ENCODE measurements at regions of chr4 and their contacts with region 1.

Region 1: DNA sequence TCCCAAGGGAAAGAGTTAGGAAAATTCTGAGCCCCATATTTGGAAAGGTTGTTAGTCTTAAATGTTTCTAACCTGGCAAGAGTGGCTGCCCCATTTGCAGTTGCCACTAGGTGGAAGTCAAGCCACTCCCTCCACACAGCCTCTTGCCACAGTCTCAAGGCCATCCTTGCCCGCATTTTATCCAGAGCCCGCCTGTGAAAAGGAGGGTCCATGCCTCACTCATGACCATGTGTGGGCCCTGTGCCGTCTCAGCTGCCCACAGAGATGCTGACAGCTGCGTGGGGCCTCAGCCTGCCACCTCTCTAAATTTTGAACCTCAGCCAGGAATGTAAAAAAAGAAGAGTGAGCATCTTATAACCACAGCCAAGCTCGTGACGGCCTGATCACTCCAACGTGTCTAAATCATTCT is 201.5 kb upstream of the FAM241A start:
- DNase-seq: peak; percentile 46
- H3K4me3 ChIP-seq: no peak overlapping the region
- H3K27ac ChIP-seq: no peak overlapping the region
- H3K4me1 ChIP-seq: no peaks in the 10 kb centered on the region
- H3K27me3 ChIP-seq: peaks cover 4% of the 10 kb centered on the region
- CTCF ChIP-seq: peak; percentile 62 to 81

Region 2: GRCh38 chr4:112060212-112060611 is 116.4 kb after region 1 on chr4:
- CTCF ChIA-PET with region 1: interaction called, 4 read pairs
- dilution Hi-C with region 1: no loop called
- in situ Hi-C with region 1: no loop called
- intact Hi-C with region 1: loop called (anchors 1 kb)
- DNase-seq: no peak
- H3K4me3 ChIP-seq: no peak overlapping the region
- H3K27ac ChIP-seq: no peak overlapping the region
- H3K4me1 ChIP-seq: no peaks in the 10 kb centered on the region
- H3K27me3 ChIP-seq: no peaks in the 10 kb centered on the region
- CTCF ChIP-seq: peak; percentile 70

Measured in mammary epithelial cell (primary cell).